ENCODE measurements at regions of chr20 and their contacts with region 1.

Region 1: DNA sequence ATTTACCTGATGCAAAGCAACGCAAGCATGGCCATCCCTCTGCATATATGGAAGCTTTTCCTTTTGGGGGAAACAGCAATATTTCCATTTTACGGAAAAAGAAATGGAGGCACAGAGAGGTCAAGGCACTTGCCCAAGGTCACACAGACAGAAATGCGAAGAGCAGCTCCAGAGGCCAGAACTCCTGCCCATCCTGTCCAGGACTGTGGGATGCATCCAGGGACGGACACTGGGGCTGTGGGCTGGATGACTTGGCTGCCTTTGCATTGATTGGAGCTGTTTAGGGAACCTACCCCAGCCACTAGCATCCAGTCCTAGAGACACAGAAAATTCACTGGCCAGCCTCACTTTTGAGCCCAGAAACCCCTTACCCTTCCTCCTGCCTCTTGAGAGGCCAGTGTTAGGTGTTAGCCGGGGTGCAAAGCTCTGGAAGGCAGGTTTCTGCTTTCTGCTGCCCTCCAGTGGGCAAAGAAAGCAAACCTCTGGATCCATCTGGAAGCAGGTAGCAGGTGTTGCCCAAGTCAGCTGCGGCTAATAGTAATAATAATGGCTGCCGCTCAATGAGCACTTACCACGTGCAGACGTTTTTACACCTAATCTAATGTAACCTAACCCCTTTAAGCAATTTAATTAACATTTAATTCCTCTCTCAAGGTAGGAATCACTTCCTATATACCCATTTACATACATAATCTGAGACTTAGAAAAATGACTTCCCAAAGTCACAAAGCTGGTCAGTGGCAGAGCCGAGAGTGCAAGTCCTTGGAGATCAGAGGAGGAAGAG is 31.7 kb upstream of the CCN5 start:
- DNase-seq: peak; percentile 91
- H3K4me3 ChIP-seq: no peak overlapping the region
- H3K27ac ChIP-seq: peak overlapping the region; percentile 41
- H3K4me1 ChIP-seq: peaks cover 32% of the 10 kb centered on the region
- CTCF ChIP-seq: peak; percentile 91

Region 2: GRCh38 chr20:44388466-44389023 is 294.9 kb before region 1 on chr20:
- CTCF ChIA-PET with region 1: no interaction called
- POLR2A ChIA-PET with region 1: no interaction called
- intact Hi-C with region 1: loop called (anchors 2 kb)
- DNase-seq: peak; percentile 62
- H3K4me3 ChIP-seq: no peak overlapping the region
- H3K27ac ChIP-seq: no peak overlapping the region
- H3K4me1 ChIP-seq: no peaks in the 10 kb centered on the region
- CTCF ChIP-seq: peak; percentile 81

Region 3: DNA sequence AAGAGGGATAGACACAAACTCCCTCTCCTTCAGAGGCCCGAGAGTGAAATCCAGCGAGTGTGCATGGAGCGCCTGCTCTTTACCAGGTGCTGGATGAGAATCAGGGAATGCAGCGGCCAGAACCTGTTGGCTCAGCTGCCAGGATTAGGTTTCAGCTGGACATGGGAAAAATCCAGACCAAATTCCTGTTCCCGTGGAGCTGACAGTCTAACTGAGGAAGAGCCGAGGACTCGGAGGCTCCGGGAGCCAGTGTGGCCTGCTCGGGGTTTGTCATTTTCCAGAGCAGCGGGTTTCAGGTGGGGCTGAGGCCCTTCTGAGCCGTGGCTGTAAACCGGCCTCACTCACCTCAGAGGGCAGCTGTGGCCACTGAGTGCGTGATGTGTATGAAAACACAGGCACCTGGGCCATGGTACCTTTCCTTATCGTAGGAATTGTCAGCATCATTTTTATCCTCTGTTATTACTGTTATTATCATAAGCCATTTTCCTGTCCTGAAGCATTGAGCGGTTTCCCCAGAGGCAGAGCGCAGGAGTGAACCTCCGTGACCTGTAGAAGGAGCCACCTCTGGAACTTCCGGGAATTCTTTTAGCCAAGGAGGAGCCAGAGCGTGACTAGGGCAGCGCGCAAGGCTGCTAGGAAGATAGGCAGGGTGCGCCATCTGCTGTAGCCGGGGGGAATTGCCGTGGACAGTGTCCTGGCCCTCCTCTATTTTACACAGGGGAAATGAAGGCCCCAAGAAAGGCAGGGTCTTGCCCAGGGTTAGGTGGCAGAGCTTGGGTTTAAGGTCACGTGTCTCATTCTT is 73.7 kb before region 1 on chr20:
- CTCF ChIA-PET with region 1: interaction called, 3 read pairs
- POLR2A ChIA-PET with region 1: no interaction called
- intact Hi-C with region 1: loop called (anchors 2 kb)
- DNase-seq: peak; percentile 88
- H3K4me3 ChIP-seq: peak overlapping the region; percentile 19
- H3K27ac ChIP-seq: peak overlapping the region; percentile 86
- H3K4me1 ChIP-seq: peaks cover 45% of the 10 kb centered on the region
- CTCF ChIP-seq: peak; percentile 97

Region 4: DNA sequence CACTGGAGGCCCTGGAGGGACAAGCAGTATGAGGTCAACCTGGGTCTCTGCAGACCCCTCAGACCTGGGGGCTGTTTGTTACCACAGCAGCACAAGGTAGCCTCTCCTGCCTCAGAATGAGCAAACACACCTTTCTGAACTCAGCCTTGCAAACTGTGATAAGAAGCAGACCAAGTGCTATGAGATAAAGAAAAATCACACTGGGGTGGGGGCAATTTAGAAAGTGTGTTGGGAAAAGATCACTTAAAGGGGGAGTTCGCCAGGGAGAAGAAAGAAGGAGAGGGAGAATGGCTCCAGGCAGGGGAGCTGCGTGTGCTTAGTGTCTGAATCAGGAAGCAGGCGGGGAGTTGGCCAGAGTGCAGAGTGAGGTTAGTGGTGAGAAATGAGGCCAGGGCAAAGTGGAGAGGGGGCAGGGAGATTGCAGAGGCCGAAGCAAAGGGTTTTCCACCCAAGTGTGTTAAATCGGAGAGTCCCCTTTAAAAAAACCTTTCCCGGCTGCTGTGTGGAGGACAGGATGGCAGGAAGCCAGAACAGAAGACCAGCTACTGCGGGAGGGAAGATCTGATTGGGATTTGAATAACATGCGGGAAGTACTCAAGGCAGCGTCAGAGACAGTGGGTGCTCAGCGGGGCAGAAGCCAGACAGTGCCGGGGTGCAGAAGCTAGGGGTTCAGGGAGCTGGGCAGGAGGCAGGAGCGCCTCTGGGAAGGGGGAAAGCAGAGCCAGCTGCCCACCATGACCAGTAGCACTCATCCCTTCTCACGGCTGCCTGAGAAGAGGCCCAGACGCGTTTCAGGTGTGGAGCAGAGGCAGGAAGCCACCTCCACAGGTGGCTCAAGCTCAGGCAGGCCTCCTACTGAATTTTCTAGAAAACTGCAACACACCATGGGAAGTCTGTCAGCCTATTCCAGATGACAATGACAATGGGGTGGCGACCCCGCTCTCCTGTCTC is 41.0 kb before region 1 on chr20:
- CTCF ChIA-PET with region 1: no interaction called
- POLR2A ChIA-PET with region 1: interaction called, 11 read pairs
- intact Hi-C with region 1: loop called (anchors 2 kb)
- DNase-seq: peak; percentile 65
- H3K4me3 ChIP-seq: peak overlapping the region; percentile 38
- H3K27ac ChIP-seq: peak overlapping the region; percentile 99
- H3K4me1 ChIP-seq: peaks cover 67% of the 10 kb centered on the region
- CTCF ChIP-seq: peak; percentile 68

Region 5: GRCh38 chr20:44664131-44664530 is 19.3 kb before region 1 on chr20:
- CTCF ChIA-PET with region 1: no interaction called
- POLR2A ChIA-PET with region 1: no interaction called
- intact Hi-C with region 1: no loop called
- DNase-seq: no peak
- H3K4me3 ChIP-seq: no peak overlapping the region
- H3K27ac ChIP-seq: no peak overlapping the region
- H3K4me1 ChIP-seq: peaks cover 3% of the 10 kb centered on the region
- CTCF ChIP-seq: no peak

Region 6: GRCh38 chr20:44733341-44734069 is 50.0 kb after region 1 on chr20:
- CTCF ChIA-PET with region 1: interaction called, 3 read pairs
- POLR2A ChIA-PET with region 1: interaction called, 6 read pairs
- intact Hi-C with region 1: loop called (anchors 1 kb)
- DNase-seq: peak; percentile 68
- H3K4me3 ChIP-seq: no peak overlapping the region
- H3K27ac ChIP-seq: no peak overlapping the region
- H3K4me1 ChIP-seq: peaks cover 27% of the 10 kb centered on the region
- CTCF ChIP-seq: peak; percentile 90